ENCODE measurements at regions of chr4 and their contacts with region 1.

Region 1: DNA sequence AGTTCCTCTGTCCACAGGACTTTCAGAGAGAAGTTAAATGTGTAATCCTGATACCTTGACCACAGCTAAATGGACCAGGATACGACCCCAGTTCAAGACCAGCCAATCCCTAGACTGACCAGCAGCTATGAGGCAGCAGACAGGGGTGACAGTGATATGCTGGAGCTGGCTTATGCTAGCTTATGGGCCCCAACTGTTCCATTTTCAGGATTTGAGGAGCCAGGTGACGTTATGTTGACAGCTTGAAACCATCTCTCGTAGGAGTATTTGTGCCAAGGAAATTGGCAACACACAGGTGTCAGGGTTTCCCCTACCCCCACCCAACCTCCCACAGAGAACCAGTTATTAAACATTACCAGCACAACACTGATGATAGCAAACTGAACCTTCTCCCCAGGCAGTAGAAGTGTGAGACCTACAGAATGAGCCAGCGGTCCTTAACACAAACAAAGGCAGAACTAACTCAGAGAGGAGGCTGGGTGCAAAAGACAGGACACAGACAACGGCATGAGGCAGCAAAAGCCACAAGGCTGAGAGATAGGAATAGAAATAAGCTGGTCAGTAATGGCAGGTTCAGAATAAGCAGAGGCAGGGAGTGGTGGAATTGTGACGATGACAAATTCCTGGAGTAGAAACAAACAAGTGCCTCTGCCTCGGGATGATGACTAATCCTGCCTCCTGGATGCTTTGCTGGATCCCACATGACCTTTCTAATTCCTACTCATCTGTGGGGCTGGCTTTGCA is 85.6 kb upstream of the CPEB2 start:
- DNase-seq: no peak
- H3K4me3 ChIP-seq: no peak overlapping the region
- H3K27ac ChIP-seq: no peak overlapping the region
- H3K4me1 ChIP-seq: no peaks in the 10 kb centered on the region
- H3K27me3 ChIP-seq: no peaks in the 10 kb centered on the region
- CTCF ChIP-seq: no peak

Region 2: DNA sequence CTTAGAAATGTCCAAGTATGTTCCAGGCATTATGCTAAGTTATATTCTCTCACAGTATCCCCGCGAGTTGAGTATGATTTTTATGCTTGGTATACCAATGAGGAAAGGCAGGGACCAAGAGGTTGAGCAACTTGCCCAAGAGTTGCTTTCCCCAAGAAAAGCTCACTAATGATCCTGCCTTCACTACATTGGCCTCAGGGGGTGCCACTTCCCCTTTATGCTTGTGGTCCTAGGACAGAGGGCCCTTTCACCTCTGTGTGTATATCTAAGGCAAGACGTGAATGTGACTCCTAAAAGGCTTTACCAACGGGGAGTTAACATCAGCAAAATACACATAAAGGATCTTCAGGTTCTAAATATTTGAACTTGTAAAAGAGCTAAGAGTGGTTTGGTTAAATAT is 78.9 kb before region 1 on chr4:
- intact Hi-C with region 1: loop called (anchors 5 kb)
- DNase-seq: no peak
- H3K4me3 ChIP-seq: no peak overlapping the region
- H3K27ac ChIP-seq: no peak overlapping the region
- H3K4me1 ChIP-seq: peaks cover 6 to 10% of the 10 kb centered on the region in 2 donors
- H3K27me3 ChIP-seq: no peaks in the 10 kb centered on the region
- CTCF ChIP-seq: peak in 2 of 3 experiments; percentile 19 to 25

Measured in ascending aorta (tissue), 2 donors.